HepG2 (cell line): ENCODE measurements at regions of chr20 and their contacts with region 1.

Region 1: GRCh38 chr20:44475694-44476560 is at the start of gene TTPAL:
- DNase-seq: peak; percentile 89
- ATAC-seq: peak; percentile 96
- H3K4me3 ChIP-seq: peak within 1 kb of the TSS; percentile 74 to 86 (median 82)
- H3K27ac ChIP-seq: peak within 1 kb of the TSS; percentile 52
- H3K4me1 ChIP-seq: peaks cover 46% of the 10 kb centered on the region
- H3K27me3 ChIP-seq: no peaks in the 10 kb centered on the region; a peak in 1 of 5 replicates
- CTCF ChIP-seq: peak; percentile 93
- EP300 ChIP-seq: peak; percentile 42 to 53; a peak in 2 of 4 replicates
- POLR2A ChIP-seq: peak; percentile 91 to 100
- RAD21 ChIP-seq: peak; percentile 89
- total RNA-seq, gene TTPAL: 18.8 and 25.0 TPM in 2 replicates

Region 2: DNA sequence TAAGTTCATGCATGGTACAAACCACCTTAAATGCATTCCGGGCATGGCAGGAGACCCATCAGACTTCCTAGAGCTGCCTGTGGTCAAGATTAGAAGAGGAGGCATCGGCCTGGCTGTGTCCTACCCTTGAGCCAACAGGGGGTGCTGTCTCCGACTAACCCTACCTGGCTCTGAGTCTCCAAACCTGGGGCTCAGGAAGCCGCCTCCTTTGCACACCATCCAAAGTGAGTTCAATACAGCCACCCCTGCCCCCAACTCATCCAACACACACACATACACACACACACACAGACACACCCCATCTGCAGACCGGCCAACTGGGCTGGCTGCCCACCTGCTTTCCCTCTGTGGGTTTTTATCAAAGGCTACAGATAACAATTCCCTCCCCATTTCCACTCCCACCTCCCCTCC is 366.0 kb before region 1 on chr20:
- CTCF ChIA-PET with region 1: no interaction called
- POLR2A ChIA-PET with region 1: no interaction called
- in situ Hi-C with region 1: loop called (anchors 10 kb)
- intact Hi-C with region 1: no loop called
- DNase-seq: no peak
- ATAC-seq: peak; percentile 42; the same call in 2 of the 3 replicates
- H3K4me3 ChIP-seq: no peak overlapping the region
- H3K27ac ChIP-seq: no peak overlapping the region
- H3K4me1 ChIP-seq: peaks cover 5% of the 10 kb centered on the region; the same call in 1 of the 2 replicates
- H3K27me3 ChIP-seq: peaks cover 4 to 34% of the 10 kb centered on the region in 2 experiments
- CTCF ChIP-seq: peak; percentile 44
- EP300 ChIP-seq: no peak
- POLR2A ChIP-seq: no peak
- RAD21 ChIP-seq: no peak

Region 3: GRCh38 chr20:44217342-44218092 is 258.4 kb before region 1 on chr20:
- CTCF ChIA-PET with region 1: interaction called, 36 read pairs
- POLR2A ChIA-PET with region 1: interaction called, 6 read pairs
- in situ Hi-C with region 1: loop called (anchors 5 kb)
- intact Hi-C with region 1: loop called (anchors 1 kb)
- DNase-seq: peak; percentile 82
- ATAC-seq: peak; percentile 84
- H3K4me3 ChIP-seq: no peak overlapping the region
- H3K27ac ChIP-seq: no peak overlapping the region
- H3K4me1 ChIP-seq: peaks cover 28% of the 10 kb centered on the region
- H3K27me3 ChIP-seq: no peaks in the 10 kb centered on the region
- CTCF ChIP-seq: peak; percentile 99
- EP300 ChIP-seq: no peak
- POLR2A ChIP-seq: no peak
- RAD21 ChIP-seq: peak; percentile 98

Region 4: DNA sequence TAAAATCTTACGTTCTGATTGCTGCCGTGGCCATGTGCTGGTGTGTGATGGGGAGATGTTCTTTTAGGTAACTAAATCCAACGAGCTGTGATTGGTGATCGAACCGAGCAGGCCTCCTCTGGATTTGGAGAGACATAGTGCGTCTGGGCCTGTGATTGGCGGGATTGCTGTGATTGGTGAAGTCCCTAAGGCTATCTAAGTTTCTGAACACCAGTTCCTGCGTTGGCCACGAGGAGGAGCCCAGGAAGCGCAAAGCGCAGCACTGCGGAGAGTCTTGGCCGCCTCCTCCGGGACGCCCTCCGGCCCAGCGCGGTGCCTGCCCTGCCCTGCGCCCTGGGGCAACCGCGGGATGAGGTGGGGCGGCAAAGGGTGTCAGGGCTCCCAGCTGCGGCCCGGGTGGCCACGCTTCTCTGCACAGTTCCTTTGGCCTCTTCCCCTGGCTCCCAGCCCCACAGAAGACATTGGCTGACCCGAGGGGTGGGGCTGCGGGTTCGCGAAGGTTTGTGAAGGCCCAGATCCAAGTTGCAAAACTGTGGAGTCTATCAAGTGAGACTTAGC is 87.4 kb before region 1 on chr20:
- CTCF ChIA-PET with region 1: interaction called, 25 read pairs
- POLR2A ChIA-PET with region 1: interaction called, 11 read pairs
- in situ Hi-C with region 1: no loop called
- intact Hi-C with region 1: loop called (anchors 1 kb)
- DNase-seq: no peak
- ATAC-seq: peak; percentile 11
- H3K4me3 ChIP-seq: no peak overlapping the region
- H3K27ac ChIP-seq: no peak overlapping the region
- H3K4me1 ChIP-seq: peaks cover 72% of the 10 kb centered on the region
- H3K27me3 ChIP-seq: no peaks in the 10 kb centered on the region
- CTCF ChIP-seq: peak; percentile 75
- EP300 ChIP-seq: 0 out of 4 replicates have a peak, but pooled peaks of 1 of the 2 experiments have one; percentile 3
- POLR2A ChIP-seq: no peak
- RAD21 ChIP-seq: peak; percentile 80

Region 5: GRCh38 chr20:44407402-44408184 is 68.3 kb before region 1 on chr20:
- CTCF ChIA-PET with region 1: no interaction called
- POLR2A ChIA-PET with region 1: interaction called, 14 read pairs
- in situ Hi-C with region 1: no loop called
- intact Hi-C with region 1: no loop called
- DNase-seq: no peak
- ATAC-seq: no peak
- H3K4me3 ChIP-seq: no peak overlapping the region
- H3K27ac ChIP-seq: peak overlapping the region; percentile 55
- H3K4me1 ChIP-seq: peaks cover 100% of the 10 kb centered on the region
- H3K27me3 ChIP-seq: no peaks in the 10 kb centered on the region; a peak in 1 of 5 replicates
- CTCF ChIP-seq: no peak
- EP300 ChIP-seq: no peak
- POLR2A ChIP-seq: no peak; a peak in 1 of 4 replicates
- RAD21 ChIP-seq: no peak

Region 6: GRCh38 chr20:44460795-44461141 is 15.2 kb before region 1 on chr20:
- CTCF ChIA-PET with region 1: interaction called, 3 read pairs
- POLR2A ChIA-PET with region 1: interaction called, 11 read pairs
- in situ Hi-C with region 1: no loop called
- intact Hi-C with region 1: no loop called
- DNase-seq: peak; percentile 73
- ATAC-seq: peak; percentile 60
- H3K4me3 ChIP-seq: peak overlapping the region; percentile 6 to 55 (median 18); a peak in 4 of 6 replicates
- H3K27ac ChIP-seq: peak overlapping the region; percentile 58
- H3K4me1 ChIP-seq: peaks cover 69% of the 10 kb centered on the region
- H3K27me3 ChIP-seq: no peaks in the 10 kb centered on the region
- CTCF ChIP-seq: peak; percentile 89
- EP300 ChIP-seq: no peak
- POLR2A ChIP-seq: no peak
- RAD21 ChIP-seq: peak; percentile 82

Region 7: DNA sequence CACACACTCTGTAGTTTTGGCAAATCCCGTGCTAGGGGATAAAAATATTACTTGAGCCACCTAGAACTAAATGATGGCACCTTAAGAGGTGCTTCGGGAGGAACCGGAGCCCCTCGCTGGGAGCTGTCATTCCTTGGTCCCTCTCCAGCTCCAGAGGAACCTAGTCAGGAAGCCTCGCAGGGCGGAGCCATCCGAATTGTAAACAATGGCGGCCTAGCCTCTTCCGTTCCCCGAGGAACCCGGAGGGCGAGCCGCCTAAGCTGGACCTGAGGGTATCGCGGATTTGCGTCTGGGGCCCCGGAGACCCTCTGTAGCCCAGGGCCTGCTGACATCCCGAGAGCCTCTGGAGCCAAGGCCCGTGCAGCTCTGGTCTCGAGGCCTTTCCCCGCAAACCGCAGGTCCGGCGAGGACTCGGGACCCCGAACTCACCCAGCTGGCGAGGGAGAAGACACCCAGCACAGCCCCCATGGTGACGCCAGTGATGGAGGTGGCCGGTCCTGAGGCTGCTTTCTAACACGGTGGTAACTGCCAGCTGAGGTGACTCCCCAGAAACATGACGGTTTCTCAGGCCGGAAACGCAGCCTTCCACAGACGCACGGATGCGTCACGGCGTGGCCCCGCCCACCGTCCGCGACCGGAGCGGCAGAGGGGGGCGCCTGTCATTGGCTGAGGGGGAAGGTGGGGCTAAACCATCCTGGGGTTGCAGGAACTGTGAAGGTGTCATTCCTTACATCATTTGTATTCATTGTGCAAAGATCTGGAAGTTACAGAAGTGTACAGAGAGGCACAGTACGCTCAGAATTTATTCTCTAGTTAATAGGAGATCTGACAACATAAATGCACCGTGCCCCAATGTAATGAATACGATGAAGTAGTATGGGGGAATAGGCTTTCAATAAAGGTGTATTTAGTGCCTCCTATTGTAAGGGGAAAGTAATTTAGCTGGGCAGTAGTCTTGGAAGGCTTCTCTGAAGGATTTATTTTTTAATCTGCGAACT is 45.9 kb after region 1 on chr20 and contains the start of gene SERINC3:
- CTCF ChIA-PET with region 1: interaction called, 3 read pairs
- POLR2A ChIA-PET with region 1: interaction called, 17 read pairs
- in situ Hi-C with region 1: no loop called
- intact Hi-C with region 1: loop called (anchors 2 kb)
- DNase-seq: peak; percentile 94
- ATAC-seq: peak; percentile 99
- H3K4me3 ChIP-seq: peak within 1 kb of the TSS; percentile 85 to 96 (median 89)
- H3K27ac ChIP-seq: peak within 1 kb of the TSS; percentile 84
- H3K4me1 ChIP-seq: peaks cover 77% of the 10 kb centered on the region
- H3K27me3 ChIP-seq: peaks cover 0 to 7% of the 10 kb centered on the region in 2 experiments; a peak in 1 of 5 replicates
- CTCF ChIP-seq: peak; percentile 6
- EP300 ChIP-seq: no peak; a peak in 2 of 4 replicates
- POLR2A ChIP-seq: peak; percentile 79 to 94
- RAD21 ChIP-seq: peak; percentile 56
- total RNA-seq, gene SERINC3: 53.5 and 82.0 TPM in 2 replicates